ENCODE measurements at regions of chr7 and their contacts with region 1.

Region 1: GRCh38 chr7:136714062-136714461 is 154.4 kb upstream of the CHRM2 start:
- DNase-seq: no peak
- H3K4me3 ChIP-seq: no peak overlapping the region
- H3K27ac ChIP-seq: no peak overlapping the region
- H3K4me1 ChIP-seq: no peaks in the 10 kb centered on the region
- H3K27me3 ChIP-seq: no peaks in the 10 kb centered on the region
- CTCF ChIP-seq: no peak
- EP300 ChIP-seq: no peak
- POLR2A ChIP-seq: no peak

Region 2: DNA sequence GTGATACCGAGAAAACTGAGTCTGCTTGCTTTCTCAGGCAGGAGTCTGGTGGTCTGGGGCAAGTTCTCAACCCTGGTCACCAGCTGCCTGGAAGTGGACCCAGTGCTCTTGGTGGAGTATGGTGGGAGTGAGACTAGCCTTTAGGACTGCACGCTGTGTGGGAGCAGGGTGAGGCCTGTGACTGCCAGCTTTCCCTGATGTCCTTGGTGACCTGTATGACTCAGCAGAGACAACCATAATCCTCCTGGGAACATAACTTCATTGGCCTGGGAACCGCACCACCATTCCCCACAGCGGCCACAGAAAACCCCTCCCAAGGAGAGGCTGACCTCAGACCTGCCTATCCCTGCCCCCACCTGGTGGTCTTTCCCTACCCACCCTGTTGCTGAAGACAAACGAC is 14.9 kb after region 1 on chr7:
- in situ Hi-C with region 1: no loop called
- intact Hi-C with region 1: loop called (anchors 1 kb)
- DNase-seq: no peak
- H3K4me3 ChIP-seq: no peak overlapping the region
- H3K27ac ChIP-seq: no peak overlapping the region
- H3K4me1 ChIP-seq: no peaks in the 10 kb centered on the region
- H3K27me3 ChIP-seq: no peaks in the 10 kb centered on the region
- CTCF ChIP-seq: no peak
- EP300 ChIP-seq: no peak
- POLR2A ChIP-seq: no peak

Measured in transverse colon (tissue), 4 donors.